Panc1 (cell line): ENCODE measurements at regions of chr11 and their contacts with region 1.

Region 1: GRCh38 chr11:85196968-85197367 is 430.2 kb downstream of the DLG2 start:
- DNase-seq: no peak
- ATAC-seq: no peak
- H3K4me3 ChIP-seq: no peak overlapping the region
- H3K27ac ChIP-seq: no peak overlapping the region
- H3K4me1 ChIP-seq: no peaks in the 10 kb centered on the region
- H3K27me3 ChIP-seq: no peaks in the 10 kb centered on the region
- CTCF ChIP-seq: no peak

Region 2: DNA sequence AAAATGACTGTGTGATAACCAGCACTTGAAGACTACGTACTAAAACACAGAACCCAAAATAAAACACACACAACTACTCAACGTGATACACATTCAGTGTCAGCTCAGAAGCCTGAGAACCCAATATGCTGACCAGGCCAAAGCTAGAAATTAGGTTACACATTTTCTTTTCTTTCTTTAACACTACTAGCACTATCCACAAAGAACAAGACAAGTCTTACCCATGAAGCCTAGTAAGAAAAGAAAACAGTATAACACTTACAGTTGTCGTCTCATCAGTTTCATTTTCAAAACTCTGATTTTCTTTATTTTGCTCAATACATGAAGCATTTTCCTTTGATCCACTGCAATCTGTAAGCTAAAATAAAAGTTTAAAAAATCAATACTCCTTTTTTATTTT is 42.7 kb before region 1 on chr11:
- CTCF ChIA-PET with region 1: no interaction called
- POLR2A ChIA-PET with region 1: interaction called, 19 read pairs
- in situ Hi-C with region 1: no loop called
- intact Hi-C with region 1: no loop called
- DNase-seq: no peak
- ATAC-seq: no peak
- H3K4me3 ChIP-seq: no peak overlapping the region
- H3K27ac ChIP-seq: no peak overlapping the region
- H3K4me1 ChIP-seq: no peaks in the 10 kb centered on the region
- H3K27me3 ChIP-seq: no peaks in the 10 kb centered on the region
- CTCF ChIP-seq: no peak